ENCODE measurements at regions of chr10 and their contacts with region 1.

Region 1: GRCh38 chr10:17430647-17431355 is 23.6 kb downstream of the ST8SIA6 start:
- DNase-seq: peak; percentile 79
- H3K4me3 Mint-ChIP-seq: no peak overlapping the region
- H3K27ac Mint-ChIP-seq: no peak overlapping the region
- H3K4me1 Mint-ChIP-seq: peaks cover 16% of the 10 kb centered on the region
- H3K27me3 Mint-ChIP-seq: peaks cover 39% of the 10 kb centered on the region
- CTCF ChIP-seq: peak; percentile 77

Region 2: DNA sequence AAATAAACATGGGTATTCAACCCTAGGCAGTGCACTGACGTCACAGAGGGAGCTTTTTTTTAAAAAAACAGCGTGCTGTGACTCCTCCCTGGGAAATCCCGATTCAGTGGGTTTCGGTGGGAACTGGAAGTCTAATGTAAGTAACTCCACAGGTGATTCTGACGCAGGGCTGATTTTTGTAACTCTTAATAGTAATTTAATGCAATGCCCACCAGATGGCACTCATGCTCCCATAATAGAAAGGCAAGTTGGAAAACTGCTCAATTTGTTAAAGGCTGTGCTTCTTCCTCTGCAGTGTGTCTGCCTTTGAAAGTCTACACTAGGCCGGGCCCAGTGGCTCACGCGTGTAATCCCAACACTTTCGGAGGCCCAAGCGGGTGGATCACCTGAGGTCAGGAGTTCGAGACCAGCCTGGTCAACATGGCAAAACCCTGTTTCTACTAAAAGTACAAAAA is 602.7 kb before region 1 on chr10:
- CTCF ChIA-PET with region 1: no interaction called
- intact Hi-C with region 1: loop called (anchors 2 kb)
- DNase-seq: peak; percentile 70
- H3K4me3 Mint-ChIP-seq: no peak overlapping the region
- H3K27ac Mint-ChIP-seq: no peak overlapping the region
- H3K4me1 Mint-ChIP-seq: peaks cover 35% of the 10 kb centered on the region
- H3K27me3 Mint-ChIP-seq: no peaks in the 10 kb centered on the region
- CTCF ChIP-seq: peak; percentile 40

Region 3: GRCh38 chr10:16843252-16843870 is 587.4 kb before region 1 on chr10:
- CTCF ChIA-PET with region 1: no interaction called
- intact Hi-C with region 1: loop called (anchors 5 kb)
- DNase-seq: peak; percentile 11
- H3K4me3 Mint-ChIP-seq: no peak overlapping the region
- H3K27ac Mint-ChIP-seq: no peak overlapping the region
- H3K4me1 Mint-ChIP-seq: no peaks in the 10 kb centered on the region
- H3K27me3 Mint-ChIP-seq: peaks cover 23% of the 10 kb centered on the region
- CTCF ChIP-seq: peak; percentile 27

Region 4: DNA sequence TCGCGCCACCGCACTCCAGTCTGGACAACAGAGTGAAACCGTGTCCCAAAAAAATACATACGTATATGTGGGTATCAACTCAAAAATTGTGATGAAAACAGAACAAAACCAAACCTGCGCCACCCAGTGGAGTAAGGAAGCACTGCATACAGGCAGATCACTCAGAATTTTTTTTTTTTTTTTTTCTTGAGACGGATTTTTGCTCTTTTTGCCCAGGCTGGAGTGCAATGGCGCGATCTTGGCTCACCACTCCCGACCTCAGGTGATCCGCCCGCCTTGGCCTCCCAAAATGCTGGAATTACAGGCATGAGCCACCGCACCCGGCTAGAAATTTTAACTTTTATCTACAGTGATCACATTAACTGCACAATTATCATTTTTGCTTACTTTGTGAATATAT is 312.1 kb after region 1 on chr10:
- CTCF ChIA-PET with region 1: no interaction called
- intact Hi-C with region 1: loop called (anchors 2 kb)
- DNase-seq: peak; percentile 64
- H3K4me3 Mint-ChIP-seq: no peak overlapping the region
- H3K27ac Mint-ChIP-seq: no peak overlapping the region
- H3K4me1 Mint-ChIP-seq: no peaks in the 10 kb centered on the region
- H3K27me3 Mint-ChIP-seq: no peaks in the 10 kb centered on the region
- CTCF ChIP-seq: peak; percentile 67

Measured in Calu3 (cell line).